ENCODE measurements at regions of chr1 and their contacts with region 1.

Region 1: GRCh38 chr1:22963044-22963677 is 9.5 kb downstream of the LACTBL1 start:
- DNase-seq: no peak
- H3K4me3 ChIP-seq: no peak overlapping the region
- H3K27ac ChIP-seq: no peak overlapping the region
- H3K4me1 ChIP-seq: no peaks in the 10 kb centered on the region
- H3K27me3 ChIP-seq: peaks cover 13 to 16% of the 10 kb centered on the region in 2 experiments
- CTCF ChIP-seq: no peak
- POLR2A ChIP-seq: no peak

Region 2: DNA sequence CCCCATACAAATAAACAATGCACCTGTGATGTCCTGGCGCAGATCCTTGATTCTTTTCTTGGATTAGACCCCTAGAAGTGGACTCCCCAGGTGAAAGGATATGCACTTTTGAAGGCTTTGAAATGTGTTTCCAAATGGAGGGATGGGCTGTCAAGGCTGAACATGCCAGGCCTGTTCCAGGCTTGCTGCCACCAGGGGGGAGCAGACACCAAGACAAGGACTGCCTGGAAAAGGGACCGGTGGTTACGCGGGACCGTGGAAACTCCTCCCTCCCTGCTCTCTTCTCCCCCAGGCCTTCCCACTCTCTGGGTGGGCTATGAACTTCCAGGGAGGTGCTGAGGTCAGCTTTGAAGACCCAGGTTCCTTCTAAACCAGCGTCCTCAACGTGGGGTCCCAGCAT is 297.4 kb before region 1 on chr1:
- CTCF ChIA-PET with region 1: interaction called, 42 read pairs
- POLR2A ChIA-PET with region 1: interaction called, 5 read pairs
- dilution Hi-C with region 1: loop called (anchors 25 kb)
- intact Hi-C with region 1: loop called (anchors 1 kb)
- DNase-seq: peak; percentile 47
- H3K4me3 ChIP-seq: no peak overlapping the region
- H3K27ac ChIP-seq: no peak overlapping the region
- H3K4me1 ChIP-seq: no peaks in the 10 kb centered on the region
- H3K27me3 ChIP-seq: peaks cover 2 to 10% of the 10 kb centered on the region in 2 experiments
- CTCF ChIP-seq: peak; percentile 72 to 79
- POLR2A ChIP-seq: no peak

Region 3: DNA sequence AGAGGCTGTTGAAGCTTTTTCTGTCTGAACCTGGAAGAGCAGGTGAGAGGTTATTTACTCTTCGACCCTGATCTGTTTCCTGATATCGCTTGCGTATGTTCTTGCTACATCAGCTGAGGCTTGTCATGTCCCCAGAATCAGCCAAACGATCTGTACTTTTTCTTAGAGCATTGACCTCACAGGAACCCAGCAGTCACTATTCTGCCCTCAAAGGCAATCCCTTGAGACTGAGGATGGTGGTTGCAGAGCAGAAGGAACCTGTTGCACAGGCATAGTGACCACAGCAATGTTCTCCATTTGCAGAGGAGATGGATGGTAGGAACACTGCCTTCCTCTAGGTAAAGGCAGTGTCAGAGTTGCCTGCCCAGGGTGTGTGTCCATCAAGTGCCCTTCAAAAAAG is 20.8 kb after region 1 on chr1:
- CTCF ChIA-PET with region 1: no interaction called
- POLR2A ChIA-PET with region 1: no interaction called
- dilution Hi-C with region 1: no loop called
- intact Hi-C with region 1: no loop called
- DNase-seq: no peak
- H3K4me3 ChIP-seq: no peak overlapping the region
- H3K27ac ChIP-seq: no peak overlapping the region
- H3K4me1 ChIP-seq: no peaks in the 10 kb centered on the region
- H3K27me3 ChIP-seq: peaks cover 2 to 13% of the 10 kb centered on the region in 2 experiments
- CTCF ChIP-seq: no peak
- POLR2A ChIP-seq: no peak

Region 4: GRCh38 chr1:23140940-23141596 is 177.9 kb after region 1 on chr1:
- CTCF ChIA-PET with region 1: no interaction called
- POLR2A ChIA-PET with region 1: no interaction called
- dilution Hi-C with region 1: no loop called
- intact Hi-C with region 1: no loop called
- DNase-seq: no peak
- H3K4me3 ChIP-seq: no peak overlapping the region
- H3K27ac ChIP-seq: no peak overlapping the region
- H3K4me1 ChIP-seq: no peaks in the 10 kb centered on the region
- H3K27me3 ChIP-seq: no peaks in the 10 kb centered on the region
- CTCF ChIP-seq: no peak
- POLR2A ChIP-seq: no peak